K562 (cell line): ENCODE measurements at regions of chr10 and their contacts with region 1.

Region 1: DNA sequence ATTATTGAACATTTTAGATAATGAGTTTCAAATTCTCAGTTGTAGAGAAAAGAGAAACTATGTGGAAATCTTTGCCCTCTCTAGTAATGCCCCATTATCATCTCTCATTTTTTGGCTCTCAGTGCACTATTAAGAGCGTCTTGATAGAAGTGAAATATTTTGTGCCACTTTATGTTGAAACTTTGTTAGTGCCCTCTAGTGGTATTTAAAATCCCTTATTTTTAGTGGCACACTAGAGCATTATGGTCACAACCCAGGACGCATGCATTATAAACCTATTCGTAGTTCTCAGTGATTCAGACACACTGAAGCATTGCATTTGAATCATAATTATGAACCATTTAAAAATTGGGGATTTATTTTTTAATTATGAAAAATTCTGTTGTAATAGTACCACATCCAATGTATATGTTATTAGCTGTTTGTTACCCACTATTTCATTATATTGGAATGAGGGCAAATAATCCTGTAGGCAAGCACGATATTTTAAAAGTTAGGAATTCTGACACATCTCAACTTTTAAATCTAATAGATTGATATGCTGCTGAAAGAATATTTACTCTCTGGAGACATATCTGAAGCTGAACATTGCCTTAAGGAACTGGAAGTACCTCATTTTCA is 21.9 kb downstream of the PDCD4 start:
- DNase-seq: peak in 2 of 4 experiments; percentile 30 to 37
- ATAC-seq: peak; percentile 82
- H3K4me3 ChIP-seq: no peak overlapping the region
- H3K27ac ChIP-seq: no peak overlapping the region
- H3K4me1 ChIP-seq: no peaks in the 10 kb centered on the region
- H3K27me3 ChIP-seq: no peaks in the 10 kb centered on the region
- CTCF ChIP-seq: peak; percentile 30 to 49 (median 43); a peak in 4 of 6 replicates
- EP300 ChIP-seq: no peak
- POLR2A ChIP-seq: no peak
- RAD21 ChIP-seq: peak; percentile 51 to 65

Region 2: DNA sequence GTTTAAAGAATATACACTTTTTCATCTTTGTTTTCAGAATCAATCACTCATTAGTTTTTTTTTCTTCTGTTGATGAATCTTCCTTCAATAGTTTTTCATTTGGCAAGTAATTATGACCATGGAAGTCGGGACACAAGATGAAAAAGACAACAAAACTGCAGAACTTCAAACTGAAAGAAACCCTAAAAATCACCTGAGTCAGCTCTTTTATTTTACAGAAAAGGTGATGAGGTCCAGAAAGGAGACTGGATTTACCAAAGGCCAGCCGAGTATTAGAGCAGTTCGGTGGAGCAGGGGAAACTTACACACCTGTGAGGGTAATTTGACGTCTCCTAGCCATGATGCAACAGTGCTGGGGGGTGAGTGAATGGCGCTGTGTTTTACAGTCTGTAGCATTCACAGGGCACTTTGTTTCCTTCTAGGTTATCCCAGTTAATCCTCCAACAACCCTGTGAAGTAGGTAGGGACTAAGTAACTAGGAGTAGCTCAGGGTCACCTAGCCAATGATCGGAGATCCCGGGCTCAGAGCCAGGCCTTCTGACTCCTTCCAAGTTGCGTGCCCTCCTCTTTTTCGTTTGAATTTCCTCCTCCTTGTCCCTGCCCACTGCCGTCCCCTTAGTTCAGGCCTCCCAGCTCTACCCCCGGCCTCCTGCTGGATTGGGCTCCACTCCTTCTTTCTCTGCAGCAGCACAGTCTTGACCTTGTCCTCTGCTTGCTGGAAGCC is 235.5 kb before region 1 on chr10:
- CTCF ChIA-PET with region 1: no interaction called
- POLR2A ChIA-PET with region 1: no interaction called
- in situ Hi-C with region 1: no loop called
- intact Hi-C with region 1: no loop called
- DNase-seq: no peak
- ATAC-seq: peak; percentile 52
- H3K4me3 ChIP-seq: no peak overlapping the region
- H3K27ac ChIP-seq: no peak overlapping the region
- H3K4me1 ChIP-seq: peaks cover 0 to 7% of the 10 kb centered on the region in 2 experiments; a peak in 2 of 5 replicates
- H3K27me3 ChIP-seq: no peaks in the 10 kb centered on the region
- CTCF ChIP-seq: no peak
- EP300 ChIP-seq: no peak
- POLR2A ChIP-seq: no peak
- RAD21 ChIP-seq: no peak

Region 3: DNA sequence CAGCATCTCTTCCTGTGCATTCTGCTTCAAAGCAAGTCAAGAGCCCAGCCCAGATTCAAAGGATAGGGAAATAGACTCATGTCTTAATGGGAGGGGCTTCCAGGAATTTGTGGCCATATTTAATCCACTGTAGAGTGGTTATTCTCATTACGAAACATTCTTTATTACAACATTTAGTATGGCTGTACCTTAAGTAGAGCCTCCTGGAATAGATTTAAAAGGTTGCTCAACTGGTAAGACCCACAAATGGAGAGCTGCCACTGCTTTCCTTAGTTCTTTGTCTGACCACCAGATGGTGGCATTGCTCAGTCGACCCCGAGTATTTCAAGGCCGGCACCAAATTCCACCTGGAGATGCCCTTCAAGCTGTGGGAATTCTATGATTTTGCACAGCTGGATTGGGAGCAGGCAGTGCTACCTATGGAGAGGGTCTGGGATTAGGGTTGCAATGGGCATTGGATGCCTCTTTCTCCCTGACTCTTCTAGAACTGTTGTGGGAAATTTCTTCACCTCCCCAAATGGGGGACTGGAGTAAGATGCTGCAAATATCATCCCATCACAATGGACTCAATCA is 147.3 kb before region 1 on chr10:
- CTCF ChIA-PET with region 1: no interaction called
- POLR2A ChIA-PET with region 1: no interaction called
- in situ Hi-C with region 1: no loop called
- intact Hi-C with region 1: loop called (anchors 2 kb)
- DNase-seq: peak; percentile 45 to 58 (median 48)
- ATAC-seq: peak; percentile 87
- H3K4me3 ChIP-seq: no peak overlapping the region
- H3K27ac ChIP-seq: no peak overlapping the region
- H3K4me1 ChIP-seq: peaks cover 0 to 3% of the 10 kb centered on the region in 2 experiments; a peak in 2 of 5 replicates
- H3K27me3 ChIP-seq: no peaks in the 10 kb centered on the region
- CTCF ChIP-seq: peak; percentile 65 to 68 (median 66)
- EP300 ChIP-seq: no peak
- POLR2A ChIP-seq: no peak
- RAD21 ChIP-seq: peak; percentile 87 to 88

Region 4: DNA sequence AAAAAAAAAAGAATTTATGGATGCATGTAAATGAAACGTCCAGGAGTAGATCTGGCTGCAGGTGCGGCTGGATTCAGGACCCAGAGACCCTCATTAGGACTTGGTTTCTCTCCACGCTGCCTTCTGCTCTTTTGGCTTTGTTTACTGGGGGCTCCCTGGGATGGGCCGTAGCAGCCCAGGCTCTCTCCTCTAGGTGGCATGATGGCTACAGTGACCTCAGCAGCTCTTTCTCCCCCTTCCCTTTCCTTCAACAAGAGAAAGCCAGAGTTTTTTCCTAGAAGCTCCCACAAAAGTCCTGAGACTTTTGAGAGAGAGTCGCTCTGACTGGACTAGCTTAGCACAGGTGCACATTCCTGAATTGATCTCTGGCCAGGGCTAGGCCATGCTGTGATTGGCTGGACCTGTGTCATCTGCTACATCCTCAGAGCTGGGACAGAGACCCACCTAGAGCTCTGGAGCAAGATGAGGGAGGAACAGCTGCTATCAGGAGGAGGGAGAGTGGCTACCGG is 89.8 kb before region 1 on chr10:
- CTCF ChIA-PET with region 1: interaction called, 4 read pairs
- POLR2A ChIA-PET with region 1: no interaction called
- in situ Hi-C with region 1: loop called (anchors 10 kb)
- intact Hi-C with region 1: loop called (anchors 5 kb)
- DNase-seq: peak; percentile 22 to 45 (median 33)
- ATAC-seq: peak; percentile 92
- H3K4me3 ChIP-seq: no peak overlapping the region
- H3K27ac ChIP-seq: no peak overlapping the region
- H3K4me1 ChIP-seq: peaks cover 0 to 4% of the 10 kb centered on the region in 2 experiments; a peak in 2 of 5 replicates
- H3K27me3 ChIP-seq: no peaks in the 10 kb centered on the region
- CTCF ChIP-seq: peak; percentile 52 to 68 (median 65)
- EP300 ChIP-seq: no peak
- POLR2A ChIP-seq: no peak
- RAD21 ChIP-seq: peak; percentile 55 to 65

Region 5: GRCh38 chr10:110820321-110820814 is 73.3 kb before region 1 on chr10:
- CTCF ChIA-PET with region 1: no interaction called
- POLR2A ChIA-PET with region 1: interaction called, 3 read pairs
- in situ Hi-C with region 1: no loop called
- intact Hi-C with region 1: loop called (anchors 5 kb)
- DNase-seq: no peak
- ATAC-seq: no peak
- H3K4me3 ChIP-seq: no peak overlapping the region
- H3K27ac ChIP-seq: no peak overlapping the region
- H3K4me1 ChIP-seq: peaks cover 7 to 15% of the 10 kb centered on the region in 2 experiments; a peak in 4 of 5 replicates
- H3K27me3 ChIP-seq: no peaks in the 10 kb centered on the region
- CTCF ChIP-seq: no peak
- EP300 ChIP-seq: no peak
- POLR2A ChIP-seq: no peak
- RAD21 ChIP-seq: no peak